Activated naive CD4-positive, alpha-beta T cell treated with anti-CD3 and anti-CD28 coated beads for 36 hours (primary cell): ENCODE measurements at regions of chr15 and their contacts with region 1.

Region 1: DNA sequence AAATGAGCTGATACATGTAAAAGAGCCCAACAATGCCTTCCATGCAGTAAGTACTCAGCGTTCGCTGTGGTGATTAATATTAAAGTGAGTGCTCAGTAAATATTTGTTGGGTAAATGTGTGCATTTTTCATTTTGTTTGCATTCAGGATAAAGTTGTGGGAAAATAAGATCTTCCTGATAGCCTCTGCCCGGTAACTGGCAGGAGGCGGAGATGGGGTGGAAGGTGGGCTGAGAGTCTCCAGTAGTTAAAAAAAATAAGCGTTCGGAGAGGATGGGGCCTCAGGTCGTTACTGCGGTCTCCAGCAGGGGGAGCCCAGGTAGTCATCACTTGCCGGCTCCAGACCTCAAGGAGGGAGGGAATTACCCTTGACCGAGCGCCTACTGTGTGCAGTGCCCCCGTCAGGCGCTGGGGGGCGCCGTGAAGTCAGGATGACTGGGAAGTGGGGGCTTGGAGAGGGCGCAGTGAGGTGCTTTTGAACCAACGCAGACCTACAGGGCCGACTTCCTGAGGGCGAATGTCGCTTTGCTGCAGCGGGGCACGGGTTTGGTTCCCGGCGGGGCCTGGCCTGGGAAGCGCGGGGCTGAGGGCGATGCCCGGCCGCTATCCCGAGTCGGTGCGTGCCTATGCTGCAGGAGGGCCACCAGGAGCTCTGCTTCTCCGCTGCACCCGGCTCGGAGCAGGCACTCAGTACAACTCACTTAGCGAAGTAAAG is 80.1 kb downstream of the RHCG start:
- DNase-seq: peak; percentile 92
- H3K4me3 Mint-ChIP-seq: no peak overlapping the region
- H3K27ac Mint-ChIP-seq: no peak overlapping the region
- H3K4me1 Mint-ChIP-seq: peaks cover 13% of the 10 kb centered on the region
- H3K27me3 Mint-ChIP-seq: peaks cover 71% of the 10 kb centered on the region

Region 2: DNA sequence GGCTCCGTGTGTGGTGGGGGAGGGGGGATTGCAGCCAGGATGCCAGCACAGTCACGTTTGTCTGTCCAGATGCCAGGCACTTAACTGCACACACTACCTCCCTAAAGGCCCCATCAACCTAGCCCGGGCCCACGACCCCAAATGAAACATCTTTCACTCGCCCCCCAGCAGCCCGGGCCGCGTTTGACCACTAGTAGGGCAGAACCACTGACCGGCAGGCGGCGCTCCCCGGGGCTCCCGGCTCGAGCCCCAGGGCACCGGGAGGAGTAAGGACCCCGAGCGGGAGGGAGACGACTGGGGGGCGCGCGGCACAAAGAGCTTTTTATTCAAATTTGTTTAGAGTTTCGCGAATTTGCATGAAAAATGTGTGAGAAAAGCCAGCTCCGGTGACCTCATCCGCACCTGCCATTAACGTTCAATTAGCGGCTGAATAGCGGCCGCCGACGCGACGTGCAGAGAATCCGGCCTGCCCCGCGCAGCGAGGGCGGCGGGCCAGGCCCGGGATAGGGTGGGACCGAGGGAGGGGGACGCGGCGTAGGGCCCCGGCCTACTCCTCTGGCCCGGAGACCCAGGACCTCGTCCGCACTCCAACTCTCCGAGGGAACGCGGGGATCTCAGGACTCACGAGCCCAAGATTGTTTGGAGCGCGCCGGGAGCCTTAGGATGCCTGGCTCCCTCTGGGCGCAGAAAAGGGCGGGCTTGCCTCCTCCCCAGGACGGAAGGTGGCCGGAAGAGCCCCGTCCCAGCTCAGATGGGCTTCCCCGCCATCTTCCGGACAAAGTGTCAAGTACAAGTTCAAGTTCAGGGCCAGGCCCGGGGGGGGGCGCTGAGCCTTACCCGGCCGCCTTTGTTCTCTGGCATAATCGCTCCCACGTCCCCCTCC is 16.8 kb before region 1 on chr15:
- CTCF ChIA-PET with region 1: interaction called, 10 read pairs
- intact Hi-C with region 1: no loop called
- DNase-seq: peak; percentile 66
- H3K4me3 Mint-ChIP-seq: peak overlapping the region; percentile 73
- H3K27ac Mint-ChIP-seq: no peak overlapping the region
- H3K4me1 Mint-ChIP-seq: peaks cover 14% of the 10 kb centered on the region
- H3K27me3 Mint-ChIP-seq: peaks cover 60% of the 10 kb centered on the region

Region 3: GRCh38 chr15:89430530-89431341 is 14.4 kb after region 1 on chr15:
- CTCF ChIA-PET with region 1: interaction called, 40 read pairs
- intact Hi-C with region 1: loop called (anchors 1 kb)
- DNase-seq: peak; percentile 92
- H3K4me3 Mint-ChIP-seq: peak overlapping the region; percentile 70
- H3K27ac Mint-ChIP-seq: no peak overlapping the region
- H3K4me1 Mint-ChIP-seq: peaks cover 4% of the 10 kb centered on the region
- H3K27me3 Mint-ChIP-seq: peaks cover 12% of the 10 kb centered on the region

Region 4: DNA sequence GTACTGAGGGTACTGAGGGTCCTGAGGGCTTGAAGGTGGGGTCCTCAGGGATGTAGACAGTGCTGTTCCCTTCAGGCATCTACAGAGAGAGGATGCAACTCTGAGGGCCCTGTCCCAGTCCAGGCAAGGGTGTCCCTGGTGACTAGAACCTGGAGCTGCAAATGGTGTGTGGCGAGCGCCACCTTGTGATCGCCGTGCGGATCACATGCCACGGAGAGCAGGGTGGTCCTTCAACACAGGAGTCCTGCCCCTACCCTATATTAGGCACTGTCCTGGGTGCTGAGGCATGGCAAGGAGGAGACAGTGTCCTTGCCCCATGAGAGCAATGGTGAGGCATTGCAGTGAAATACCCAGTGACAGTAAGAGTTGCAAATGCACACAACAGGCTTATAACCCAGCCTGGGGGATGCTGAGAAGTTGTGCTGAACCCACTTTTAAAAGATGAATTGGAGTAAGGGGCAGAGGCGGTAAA is 56.5 kb after region 1 on chr15:
- CTCF ChIA-PET with region 1: interaction called, 4 read pairs
- intact Hi-C with region 1: loop called (anchors 1 kb)
- DNase-seq: peak; percentile 63
- H3K4me3 Mint-ChIP-seq: no peak overlapping the region
- H3K27ac Mint-ChIP-seq: no peak overlapping the region
- H3K4me1 Mint-ChIP-seq: peaks cover 2% of the 10 kb centered on the region
- H3K27me3 Mint-ChIP-seq: peaks cover 10% of the 10 kb centered on the region